A549 (cell line): ENCODE measurements at regions of chr2 and their contacts with region 1.

Region 1: GRCh38 chr2:69724540-69725159 is 17.3 kb upstream of the ANXA4 start:
- DNase-seq: peak; percentile 69 to 86
- ATAC-seq: peak; percentile 93 to 96
- H3K4me3 ChIP-seq: peak overlapping the region; percentile 31
- H3K27ac ChIP-seq: peak overlapping the region; percentile 69 to 73
- H3K4me1 ChIP-seq: peaks cover 11% of the 10 kb centered on the region
- CTCF ChIP-seq: peak; percentile 99
- EP300 ChIP-seq: no peak
- POLR2A ChIP-seq: no peak
- RAD21 ChIP-seq: peak; percentile 99

Region 2: GRCh38 chr2:69559442-69560146 is 165.1 kb before region 1 on chr2:
- CTCF ChIA-PET with region 1: interaction called, 34 read pairs
- POLR2A ChIA-PET with region 1: no interaction called
- DNase-seq: peak; percentile 72 to 84
- ATAC-seq: peak; percentile 93 to 96
- H3K4me3 ChIP-seq: no peak overlapping the region
- H3K27ac ChIP-seq: 0 out of 6 replicates have a peak overlapping the region, but pooled peaks of 1 of the 2 experiments have one; percentile 4
- H3K4me1 ChIP-seq: peaks cover 12% of the 10 kb centered on the region
- CTCF ChIP-seq: peak; percentile 92
- EP300 ChIP-seq: no peak
- POLR2A ChIP-seq: no peak
- RAD21 ChIP-seq: peak; percentile 96 to 97

Region 3: GRCh38 chr2:69652221-69652651 is 72.4 kb before region 1 on chr2:
- CTCF ChIA-PET with region 1: interaction called, 10 read pairs
- POLR2A ChIA-PET with region 1: no interaction called
- DNase-seq: peak; percentile 52 to 67
- ATAC-seq: peak; percentile 91 to 98
- H3K4me3 ChIP-seq: no peak overlapping the region
- H3K27ac ChIP-seq: peak overlapping the region in 1 of 2 experiments; percentile 77; a peak in 3 of 6 replicates
- H3K4me1 ChIP-seq: peaks cover 11% of the 10 kb centered on the region
- CTCF ChIP-seq: no peak
- EP300 ChIP-seq: no peak
- POLR2A ChIP-seq: no peak
- RAD21 ChIP-seq: 0 out of 5 replicates have a peak, but pooled peaks of 1 of the 2 experiments have one; percentile 13

Region 4: DNA sequence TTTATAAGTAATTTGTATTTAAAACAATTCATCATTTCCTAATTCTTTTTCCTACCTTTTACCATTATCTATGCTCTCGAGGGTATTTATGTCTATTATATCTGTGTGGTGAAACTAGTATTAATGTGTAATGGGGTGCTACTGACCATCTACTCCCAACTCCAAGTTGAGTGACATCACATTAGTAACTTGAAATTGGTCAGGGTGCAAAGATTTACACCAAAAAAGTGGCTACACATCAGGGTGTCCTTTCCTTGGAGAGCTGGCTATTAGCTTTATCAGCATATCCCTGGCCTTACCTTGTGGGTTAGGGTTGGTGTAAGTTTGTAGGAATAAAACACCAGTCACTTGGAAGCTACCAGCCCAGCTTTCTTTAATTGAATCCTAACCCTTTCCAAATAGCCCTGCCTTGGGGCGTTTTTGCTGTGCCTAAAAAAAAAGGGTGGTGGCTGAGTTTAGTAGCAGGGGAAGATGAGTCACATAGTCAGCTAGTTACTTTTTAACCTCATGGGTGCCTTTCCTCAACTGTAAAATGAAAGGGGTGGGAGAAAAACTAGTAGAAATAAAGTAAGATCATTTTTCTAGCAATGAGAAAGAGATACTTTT is 31.3 kb after region 1 on chr2:
- CTCF ChIA-PET with region 1: interaction called, 35 read pairs
- POLR2A ChIA-PET with region 1: no interaction called
- DNase-seq: peak; percentile 75 to 86
- ATAC-seq: peak; percentile 82 to 88
- H3K4me3 ChIP-seq: peak overlapping the region; percentile 18; the same call in 2 of the 3 replicates
- H3K27ac ChIP-seq: peak overlapping the region; percentile 84 to 91
- H3K4me1 ChIP-seq: peaks cover 93% of the 10 kb centered on the region
- CTCF ChIP-seq: no peak
- EP300 ChIP-seq: peak; percentile 12 to 37; a peak in 2 of 5 replicates
- POLR2A ChIP-seq: no peak
- RAD21 ChIP-seq: peak; percentile 34 to 41; a peak in 2 of 5 replicates

Region 5: GRCh38 chr2:69781321-69782248 is 56.9 kb after region 1 on chr2:
- CTCF ChIA-PET with region 1: interaction called, 35 read pairs
- POLR2A ChIA-PET with region 1: interaction called, 5 read pairs
- DNase-seq: peak; percentile 67 to 91
- ATAC-seq: peak; percentile 58 to 65
- H3K4me3 ChIP-seq: peak overlapping the region; percentile 7; the same call in 1 of the 3 replicates
- H3K27ac ChIP-seq: peak overlapping the region; percentile 90 to 93
- H3K4me1 ChIP-seq: peaks cover 91% of the 10 kb centered on the region
- CTCF ChIP-seq: no peak
- EP300 ChIP-seq: peak; percentile 96 to 98
- POLR2A ChIP-seq: no peak
- RAD21 ChIP-seq: peak in 1 of 2 experiments; percentile 50; a peak in 2 of 5 replicates

Region 6: DNA sequence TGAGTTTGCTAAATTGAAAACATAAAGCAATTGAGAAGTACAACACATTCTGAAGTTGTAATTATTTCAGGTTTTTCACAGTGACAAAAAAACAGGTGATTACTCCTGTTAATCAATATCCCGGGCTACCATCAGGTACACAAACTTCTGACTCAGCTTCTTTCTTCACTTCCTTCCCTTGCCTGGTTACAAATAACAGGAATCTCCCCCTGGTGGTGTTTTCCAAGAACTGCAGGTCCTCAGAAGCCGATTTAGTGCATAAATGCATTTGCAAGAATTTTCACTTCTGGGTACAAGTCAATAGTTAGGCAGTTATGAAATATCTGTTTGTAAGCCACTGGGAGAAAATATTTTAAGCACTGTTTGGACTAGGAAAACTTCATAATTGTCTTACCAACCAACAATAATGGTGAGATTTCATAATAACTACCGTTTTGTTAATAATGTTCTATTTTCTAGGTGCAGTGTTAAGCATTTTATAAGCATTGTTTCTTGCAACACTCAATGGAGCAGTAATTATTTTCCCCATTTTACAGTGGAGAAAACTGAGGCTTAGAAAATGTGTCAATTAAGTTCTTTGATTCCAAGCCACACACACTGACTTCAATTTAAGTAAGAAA is 92.4 kb after region 1 on chr2:
- CTCF ChIA-PET with region 1: interaction called, 407 read pairs
- POLR2A ChIA-PET with region 1: interaction called, 8 read pairs
- DNase-seq: peak; percentile 78 to 93
- ATAC-seq: peak; percentile 66 to 74; a peak in 5 of 6 replicates
- H3K4me3 ChIP-seq: no peak overlapping the region
- H3K27ac ChIP-seq: peak overlapping the region; percentile 43 to 45; a peak in 5 of 6 replicates
- H3K4me1 ChIP-seq: peaks cover 27% of the 10 kb centered on the region
- CTCF ChIP-seq: peak; percentile 97
- EP300 ChIP-seq: no peak
- POLR2A ChIP-seq: no peak
- RAD21 ChIP-seq: peak; percentile 88 to 93

Region 7: GRCh38 chr2:69893684-69894551 is 169.3 kb after region 1 on chr2 and contains the start of gene SNRNP27:
- CTCF ChIA-PET with region 1: interaction called, 28 read pairs
- POLR2A ChIA-PET with region 1: interaction called, 9 read pairs
- DNase-seq: peak; percentile 89 to 94
- ATAC-seq: peak; percentile 90 to 93
- H3K4me3 ChIP-seq: peak within 1 kb of the TSS; percentile 69
- H3K27ac ChIP-seq: peak within 1 kb of the TSS; percentile 75 to 88
- H3K4me1 ChIP-seq: peaks cover 8% of the 10 kb centered on the region; the same call in 2 of the 3 replicates
- CTCF ChIP-seq: no peak
- EP300 ChIP-seq: no peak
- POLR2A ChIP-seq: peak; percentile 52
- RAD21 ChIP-seq: no peak; a peak in 1 of 5 replicates
- polyA plus RNA-seq, gene SNRNP27: 53.0 and 115 TPM in 2 replicates